ENCODE measurements at regions of chr19 and their contacts with region 1.

Region 1: DNA sequence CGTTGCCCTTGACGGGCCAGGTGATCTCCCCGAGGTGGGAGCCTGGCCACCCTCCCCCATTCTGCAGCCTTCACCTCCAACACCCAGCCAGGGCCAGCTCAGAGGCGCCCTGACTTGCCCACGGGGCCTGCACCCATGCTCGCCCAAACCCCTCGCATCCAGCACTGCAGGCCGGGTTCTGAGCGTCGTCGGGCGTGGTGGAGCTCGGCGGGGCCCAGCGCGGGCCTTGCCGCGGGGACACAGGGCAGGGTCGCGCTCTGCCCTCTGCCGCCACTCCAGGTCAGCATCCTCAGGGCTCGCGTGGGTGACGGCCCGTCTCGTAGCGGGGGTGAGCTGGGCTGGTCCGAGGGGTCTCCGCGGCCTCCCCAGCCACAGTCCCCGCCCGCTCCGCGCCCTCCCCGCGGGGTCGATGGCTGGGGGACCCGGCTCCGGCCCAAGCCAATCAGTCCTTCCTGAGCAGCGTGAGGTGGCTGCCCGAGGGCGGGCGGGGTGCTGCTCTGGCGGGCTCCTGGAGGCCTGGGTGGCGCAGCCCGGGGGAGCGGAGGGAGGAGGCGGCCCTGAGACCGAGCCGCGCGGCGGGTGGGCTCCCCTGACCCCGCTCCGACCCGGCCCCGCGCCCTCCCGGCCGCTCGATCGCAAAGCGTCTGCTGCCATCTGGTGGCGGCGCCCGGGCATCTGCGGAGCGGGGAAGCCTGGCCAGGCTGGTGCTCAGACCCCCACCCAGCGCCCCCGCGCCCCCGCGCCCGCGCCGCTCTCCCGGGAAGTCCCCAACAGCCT is 61.4 kb downstream of the CCNE1 start:
- DNase-seq: peak; percentile 67
- H3K4me3 Mint-ChIP-seq: peak overlapping the region; percentile 53
- H3K27ac Mint-ChIP-seq: no peak overlapping the region
- H3K4me1 Mint-ChIP-seq: peaks cover 6% of the 10 kb centered on the region
- H3K27me3 Mint-ChIP-seq: peaks cover 13% of the 10 kb centered on the region

Region 2: DNA sequence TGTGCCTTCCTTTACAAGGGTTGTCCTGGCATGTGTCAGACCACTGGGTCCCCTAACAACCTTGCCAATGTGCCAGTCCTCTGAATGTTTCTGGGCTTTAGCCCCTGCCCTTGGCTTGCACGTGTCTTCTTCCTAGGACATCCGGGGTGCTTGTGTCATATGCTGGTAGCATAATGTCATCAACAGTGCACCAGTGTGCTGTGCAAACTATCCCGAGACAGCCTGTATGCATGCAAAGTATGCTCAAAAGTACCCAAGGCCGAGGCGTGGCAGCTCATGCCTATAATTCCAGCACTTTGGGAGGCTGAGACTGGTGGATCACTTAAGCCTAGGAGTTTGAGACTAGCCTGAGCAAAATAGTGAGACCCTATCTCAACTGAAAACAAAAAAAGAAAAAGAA is 137.4 kb before region 1 on chr19:
- CTCF ChIA-PET with region 1: interaction called, 73 read pairs
- intact Hi-C with region 1: loop called (anchors 1 kb)
- DNase-seq: no peak
- H3K4me3 Mint-ChIP-seq: no peak overlapping the region
- H3K27ac Mint-ChIP-seq: no peak overlapping the region
- H3K4me1 Mint-ChIP-seq: no peaks in the 10 kb centered on the region
- H3K27me3 Mint-ChIP-seq: no peaks in the 10 kb centered on the region

Region 3: GRCh38 chr19:29771708-29772414 is 101.4 kb before region 1 on chr19:
- CTCF ChIA-PET with region 1: interaction called, 16 read pairs
- intact Hi-C with region 1: loop called (anchors 1 kb)
- DNase-seq: peak; percentile 61
- H3K4me3 Mint-ChIP-seq: no peak overlapping the region
- H3K27ac Mint-ChIP-seq: no peak overlapping the region
- H3K4me1 Mint-ChIP-seq: no peaks in the 10 kb centered on the region
- H3K27me3 Mint-ChIP-seq: no peaks in the 10 kb centered on the region

Region 4: GRCh38 chr19:29858000-29858596 is 15.1 kb before region 1 on chr19:
- CTCF ChIA-PET with region 1: interaction called, 19 read pairs
- intact Hi-C with region 1: no loop called
- DNase-seq: peak; percentile 58
- H3K4me3 Mint-ChIP-seq: no peak overlapping the region
- H3K27ac Mint-ChIP-seq: no peak overlapping the region
- H3K4me1 Mint-ChIP-seq: peaks cover 3% of the 10 kb centered on the region
- H3K27me3 Mint-ChIP-seq: no peaks in the 10 kb centered on the region

Measured in activated naive CD4-positive, alpha-beta T cell treated with anti-CD3 and anti-CD28 coated beads for 36 hours (primary cell).